Caco-2 (cell line): ENCODE measurements at regions of chr19 and their contacts with region 1.

Region 1: DNA sequence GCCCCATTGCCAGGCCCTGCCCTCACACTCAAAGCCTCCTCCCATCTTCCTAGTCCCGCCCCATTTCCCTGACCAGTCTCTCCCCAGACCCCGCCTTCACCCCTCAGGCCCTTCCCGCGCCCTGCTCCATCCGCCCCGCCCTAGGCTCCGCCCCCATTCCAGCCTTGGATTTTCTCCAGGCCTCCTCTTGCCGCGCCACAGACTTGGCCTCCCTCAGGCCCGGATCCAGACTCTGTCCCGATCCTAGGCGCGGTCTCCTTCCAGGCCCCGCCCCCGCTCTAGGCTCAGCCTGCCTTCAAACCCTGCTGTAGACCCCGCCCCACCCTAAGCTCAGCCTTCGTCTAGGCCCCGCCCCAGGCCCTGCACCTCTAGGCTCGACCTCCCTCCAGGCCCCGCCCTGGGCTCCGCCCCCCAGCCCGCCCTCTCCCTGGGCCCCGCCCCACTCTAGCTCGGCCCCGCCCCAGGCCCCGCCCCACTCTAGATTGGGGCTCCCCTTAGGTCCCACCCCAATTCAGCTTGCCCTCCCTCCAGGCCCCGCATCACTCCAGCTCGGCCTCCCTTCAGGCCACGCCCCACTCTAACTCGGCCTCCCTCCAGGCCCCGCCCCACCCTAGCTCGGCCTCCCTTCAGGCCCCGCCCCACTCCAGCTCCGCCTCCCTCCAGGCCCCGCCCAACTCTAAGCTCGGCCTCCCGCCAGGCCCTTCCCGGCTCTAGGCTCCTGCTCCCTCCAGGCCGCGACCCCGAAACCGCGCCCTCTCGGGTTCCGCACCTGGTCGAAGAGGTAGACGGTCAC is 18.5 kb downstream of the LMTK3 start:
- DNase-seq: peak; percentile 97 to 99
- H3K4me3 ChIP-seq: peak overlapping the region; percentile 77
- H3K4me3 Mint-ChIP-seq: peak overlapping the region; percentile 64
- H3K27ac Mint-ChIP-seq: peak overlapping the region; percentile 81
- H3K4me1 ChIP-seq: peaks cover 18% of the 10 kb centered on the region
- H3K4me1 Mint-ChIP-seq: peaks cover 38% of the 10 kb centered on the region
- H3K27me3 ChIP-seq: no peaks in the 10 kb centered on the region
- H3K27me3 Mint-ChIP-seq: no peaks in the 10 kb centered on the region
- CTCF ChIP-seq: no peak

Region 2: GRCh38 chr19:48203732-48204628 is 289.1 kb before region 1 on chr19:
- CTCF ChIA-PET with region 1: interaction called, 3 read pairs
- POLR2A ChIA-PET with region 1: interaction called, 12 read pairs
- intact Hi-C with region 1: no loop called
- DNase-seq: peak; percentile 97 to 98
- H3K4me3 ChIP-seq: peak overlapping the region; percentile 67
- H3K4me3 Mint-ChIP-seq: no peak overlapping the region
- H3K27ac Mint-ChIP-seq: no peak overlapping the region
- H3K4me1 ChIP-seq: no peaks in the 10 kb centered on the region
- H3K4me1 Mint-ChIP-seq: no peaks in the 10 kb centered on the region
- H3K27me3 ChIP-seq: no peaks in the 10 kb centered on the region
- H3K27me3 Mint-ChIP-seq: no peaks in the 10 kb centered on the region
- CTCF ChIP-seq: no peak

Region 3: DNA sequence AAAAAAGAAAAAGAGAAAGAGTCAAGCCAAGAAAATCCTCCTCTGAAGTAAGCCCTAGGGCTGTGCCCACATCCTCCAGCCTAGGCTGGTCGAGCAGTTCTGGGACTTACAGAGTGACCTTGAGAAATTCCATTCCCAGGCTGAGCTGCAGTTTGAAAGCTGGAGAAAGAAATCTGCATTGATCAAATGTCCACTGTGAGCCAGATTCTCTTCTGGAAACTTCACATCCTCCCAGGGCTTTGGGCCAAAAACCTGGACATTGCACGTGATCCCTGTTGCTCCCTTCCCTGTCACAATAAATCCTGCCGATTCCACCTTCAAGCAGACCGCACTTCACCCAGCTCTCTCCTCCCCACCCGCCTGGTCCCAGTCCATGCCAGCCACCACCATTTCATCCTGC is 145.1 kb before region 1 on chr19:
- CTCF ChIA-PET with region 1: no interaction called
- POLR2A ChIA-PET with region 1: no interaction called
- intact Hi-C with region 1: no loop called
- DNase-seq: no peak
- H3K4me3 ChIP-seq: no peak overlapping the region
- H3K4me3 Mint-ChIP-seq: no peak overlapping the region
- H3K27ac Mint-ChIP-seq: peak overlapping the region; percentile 75
- H3K4me1 ChIP-seq: 0 out of 2 replicates have a peak, but pooled peaks cover 5% of the 10 kb centered on the region
- H3K4me1 Mint-ChIP-seq: peaks cover 27% of the 10 kb centered on the region
- H3K27me3 ChIP-seq: no peaks in the 10 kb centered on the region
- H3K27me3 Mint-ChIP-seq: no peaks in the 10 kb centered on the region
- CTCF ChIP-seq: no peak

Region 4: DNA sequence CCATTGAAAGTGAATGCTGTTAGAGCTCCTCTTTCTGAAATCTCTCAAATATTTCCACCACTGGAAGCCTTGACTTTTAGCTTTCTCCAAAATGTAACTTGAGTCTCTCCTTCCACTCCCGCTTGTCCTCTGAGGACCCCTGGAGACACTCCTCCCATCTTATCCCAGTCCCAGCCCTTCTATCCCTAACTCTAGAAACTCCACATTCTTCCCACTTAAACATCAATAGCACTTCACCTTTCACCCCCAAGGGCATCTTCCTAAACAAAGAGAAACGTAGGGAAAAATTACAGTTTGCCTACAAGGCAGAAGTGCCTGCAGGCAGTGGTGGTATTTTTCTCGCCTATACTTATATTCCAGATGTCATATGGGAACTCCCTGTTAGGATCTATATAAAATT is 55.6 kb before region 1 on chr19:
- CTCF ChIA-PET with region 1: no interaction called
- POLR2A ChIA-PET with region 1: no interaction called
- intact Hi-C with region 1: no loop called
- DNase-seq: no peak
- H3K4me3 ChIP-seq: no peak overlapping the region
- H3K4me3 Mint-ChIP-seq: no peak overlapping the region
- H3K27ac Mint-ChIP-seq: no peak overlapping the region
- H3K4me1 ChIP-seq: no peaks in the 10 kb centered on the region
- H3K4me1 Mint-ChIP-seq: peaks cover 7% of the 10 kb centered on the region
- H3K27me3 ChIP-seq: no peaks in the 10 kb centered on the region
- H3K27me3 Mint-ChIP-seq: no peaks in the 10 kb centered on the region
- CTCF ChIP-seq: no peak

Region 5: DNA sequence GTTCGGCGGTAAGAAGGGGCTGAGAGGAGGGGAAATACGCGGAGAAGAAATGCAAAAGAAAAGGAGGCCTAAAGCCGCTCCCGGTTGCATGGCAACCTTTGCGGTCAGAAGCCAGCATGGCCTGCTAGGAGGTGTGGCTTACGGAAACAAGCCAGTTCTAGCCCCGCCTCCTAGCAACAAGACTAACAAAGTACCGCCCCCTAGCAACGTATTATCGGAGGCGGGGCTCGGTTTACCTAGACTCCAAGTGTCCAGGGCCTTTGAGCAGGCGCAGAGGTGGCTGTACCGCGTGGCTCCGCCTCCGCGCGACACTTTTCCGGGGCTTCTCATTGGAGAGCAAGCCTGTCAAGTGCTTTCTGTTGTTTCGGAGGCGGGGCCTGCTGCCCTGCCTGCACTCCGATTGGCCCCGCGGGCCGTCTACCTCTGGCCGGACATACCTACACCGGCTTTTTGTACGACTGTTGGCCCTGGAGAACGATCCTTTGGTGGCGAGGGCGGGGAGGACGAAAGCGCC is 24.3 kb before region 1 on chr19:
- CTCF ChIA-PET with region 1: interaction called, 4 read pairs
- POLR2A ChIA-PET with region 1: interaction called, 6 read pairs
- intact Hi-C with region 1: loop called (anchors 1 kb)
- DNase-seq: peak; percentile 99 to 100
- H3K4me3 ChIP-seq: peak overlapping the region; percentile 65
- H3K4me3 Mint-ChIP-seq: peak overlapping the region; percentile 93
- H3K27ac Mint-ChIP-seq: peak overlapping the region; percentile 98
- H3K4me1 ChIP-seq: peaks cover 11% of the 10 kb centered on the region; the same call in 1 of the 2 replicates
- H3K4me1 Mint-ChIP-seq: peaks cover 7% of the 10 kb centered on the region
- H3K27me3 ChIP-seq: no peaks in the 10 kb centered on the region
- H3K27me3 Mint-ChIP-seq: no peaks in the 10 kb centered on the region
- CTCF ChIP-seq: no peak

Region 6: DNA sequence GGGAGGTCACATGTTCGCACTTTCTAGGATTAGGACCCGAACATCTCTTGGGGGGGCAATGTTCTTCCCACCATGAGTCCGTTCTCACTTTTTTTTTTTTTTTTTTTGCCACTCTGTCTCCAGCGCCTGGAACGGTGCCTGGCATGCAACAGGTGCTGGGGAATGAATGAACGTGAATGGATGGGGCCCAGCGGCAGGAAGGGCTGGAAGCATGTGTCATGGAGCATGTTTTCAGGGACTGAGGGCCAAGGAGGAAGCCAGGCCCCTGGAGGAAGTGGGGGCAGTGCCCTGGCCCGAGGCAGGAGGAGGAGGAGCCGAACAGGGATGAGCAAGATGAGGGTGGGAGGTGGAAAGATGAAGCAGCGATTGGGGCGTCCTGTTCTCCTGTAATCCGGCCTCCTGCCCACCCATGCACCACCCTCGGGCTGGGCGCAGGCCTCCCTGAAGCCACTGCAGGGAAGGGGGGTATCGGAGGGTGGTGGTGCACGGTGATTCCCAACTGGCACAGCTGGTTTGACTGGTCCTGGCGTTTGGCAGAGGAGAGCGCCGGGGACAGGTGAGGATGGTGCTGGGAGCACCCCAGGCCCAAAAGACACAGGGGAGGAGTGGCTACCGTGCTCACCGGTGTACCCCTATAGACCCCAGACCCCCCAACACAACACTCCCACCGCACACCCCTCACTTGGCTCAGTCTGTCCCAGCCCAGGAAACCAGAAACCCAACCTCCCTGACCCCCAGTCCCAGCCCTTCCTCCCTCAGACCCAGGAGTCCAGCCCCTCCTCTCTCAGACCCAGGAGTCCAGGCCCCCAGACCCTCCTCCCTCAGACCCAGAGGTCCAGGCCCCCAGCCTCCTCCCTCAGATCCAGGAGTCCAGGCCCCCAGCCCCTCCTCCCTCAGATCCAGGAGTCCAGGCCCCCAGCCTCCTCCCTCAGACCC is 50.3 kb after region 1 on chr19:
- CTCF ChIA-PET with region 1: no interaction called
- POLR2A ChIA-PET with region 1: no interaction called
- intact Hi-C with region 1: no loop called
- DNase-seq: peak; percentile 52 to 61
- H3K4me3 ChIP-seq: no peak overlapping the region
- H3K4me3 Mint-ChIP-seq: no peak overlapping the region
- H3K27ac Mint-ChIP-seq: peak overlapping the region; percentile 23
- H3K4me1 ChIP-seq: peaks cover 10% of the 10 kb centered on the region
- H3K4me1 Mint-ChIP-seq: peaks cover 16% of the 10 kb centered on the region
- H3K27me3 ChIP-seq: no peaks in the 10 kb centered on the region
- H3K27me3 Mint-ChIP-seq: no peaks in the 10 kb centered on the region
- CTCF ChIP-seq: no peak

Region 7: GRCh38 chr19:48588670-48589399 is 95.7 kb after region 1 on chr19:
- CTCF ChIA-PET with region 1: interaction called, 73 read pairs
- POLR2A ChIA-PET with region 1: interaction called, 9 read pairs
- intact Hi-C with region 1: loop called (anchors 1 kb)
- DNase-seq: peak; percentile 89 to 93
- H3K4me3 ChIP-seq: peak overlapping the region; percentile 27
- H3K4me3 Mint-ChIP-seq: peak overlapping the region; percentile 79
- H3K27ac Mint-ChIP-seq: peak overlapping the region; percentile 74
- H3K4me1 ChIP-seq: peaks cover 3% of the 10 kb centered on the region
- H3K4me1 Mint-ChIP-seq: peaks cover 14% of the 10 kb centered on the region
- H3K27me3 ChIP-seq: no peaks in the 10 kb centered on the region
- H3K27me3 Mint-ChIP-seq: no peaks in the 10 kb centered on the region
- CTCF ChIP-seq: peak; percentile 95 to 97

Region 8: DNA sequence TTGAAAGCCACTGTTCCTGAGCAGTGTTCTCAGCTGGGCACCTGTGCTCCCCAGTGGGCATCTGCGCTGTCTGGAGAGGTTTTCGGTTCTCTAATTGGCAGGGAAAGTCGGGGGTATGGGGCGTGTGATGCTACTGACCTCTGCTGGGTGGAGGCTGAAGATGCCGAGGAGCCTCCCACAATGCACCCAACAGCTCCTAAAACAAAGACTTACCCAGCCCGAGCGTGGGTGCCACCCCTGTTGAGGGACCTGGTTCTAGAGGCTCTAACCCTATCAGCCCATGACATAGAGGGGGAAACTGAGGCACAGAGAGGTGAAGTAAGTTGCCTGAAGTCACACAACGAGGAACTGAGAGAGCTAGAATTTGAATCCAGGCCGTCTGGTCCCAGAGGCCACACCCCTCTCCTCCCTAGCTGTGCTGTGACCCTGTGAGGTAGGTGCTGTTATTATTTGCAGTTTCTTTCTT is 115.7 kb after region 1 on chr19:
- CTCF ChIA-PET with region 1: interaction called, 18 read pairs
- POLR2A ChIA-PET with region 1: interaction called, 3 read pairs
- intact Hi-C with region 1: no loop called
- DNase-seq: peak in 1 of 2 experiments; percentile 70
- H3K4me3 ChIP-seq: no peak overlapping the region
- H3K4me3 Mint-ChIP-seq: peak overlapping the region; percentile 54
- H3K27ac Mint-ChIP-seq: no peak overlapping the region
- H3K4me1 ChIP-seq: no peaks in the 10 kb centered on the region
- H3K4me1 Mint-ChIP-seq: peaks cover 7% of the 10 kb centered on the region
- H3K27me3 ChIP-seq: no peaks in the 10 kb centered on the region
- H3K27me3 Mint-ChIP-seq: no peaks in the 10 kb centered on the region
- CTCF ChIP-seq: peak; percentile 82 to 86

Region 9: GRCh38 chr19:48618916-48619691 is 126.0 kb after region 1 on chr19 and contains the starts of genes RPL18 and SPHK2:
- CTCF ChIA-PET with region 1: interaction called, 3 read pairs
- POLR2A ChIA-PET with region 1: interaction called, 12 read pairs
- intact Hi-C with region 1: no loop called
- DNase-seq: peak; percentile 99
- H3K4me3 ChIP-seq: peak within 1 kb of the TSS; percentile 85
- H3K4me3 Mint-ChIP-seq: peak within 1 kb of the TSS; percentile 96
- H3K27ac Mint-ChIP-seq: peak within 1 kb of the TSS; percentile 98
- H3K4me1 ChIP-seq: peaks cover 39% of the 10 kb centered on the region
- H3K4me1 Mint-ChIP-seq: peaks cover 36% of the 10 kb centered on the region
- H3K27me3 ChIP-seq: no peaks in the 10 kb centered on the region
- H3K27me3 Mint-ChIP-seq: no peaks in the 10 kb centered on the region
- CTCF ChIP-seq: no peak
- total RNA-seq, gene RPL18: 1,812 and 1,896 TPM in 2 replicates
- total RNA-seq, gene SPHK2: 134 and 140 TPM in 2 replicates